Upper lobe of right lung (tissue), 1 donor: ENCODE measurements at regions of chr10 and their contacts with region 1.

Region 1: GRCh38 chr10:71835671-71836595 is 15.1 kb downstream of the PSAP start:
- DNase-seq: no peak
- ATAC-seq: peak; percentile 12
- H3K4me3 ChIP-seq: no peak overlapping the region
- H3K27ac ChIP-seq: peak overlapping the region; percentile 5
- H3K4me1 ChIP-seq: peaks cover 70% of the 10 kb centered on the region
- H3K27me3 ChIP-seq: no peaks in the 10 kb centered on the region
- CTCF ChIP-seq: no peak

Region 2: DNA sequence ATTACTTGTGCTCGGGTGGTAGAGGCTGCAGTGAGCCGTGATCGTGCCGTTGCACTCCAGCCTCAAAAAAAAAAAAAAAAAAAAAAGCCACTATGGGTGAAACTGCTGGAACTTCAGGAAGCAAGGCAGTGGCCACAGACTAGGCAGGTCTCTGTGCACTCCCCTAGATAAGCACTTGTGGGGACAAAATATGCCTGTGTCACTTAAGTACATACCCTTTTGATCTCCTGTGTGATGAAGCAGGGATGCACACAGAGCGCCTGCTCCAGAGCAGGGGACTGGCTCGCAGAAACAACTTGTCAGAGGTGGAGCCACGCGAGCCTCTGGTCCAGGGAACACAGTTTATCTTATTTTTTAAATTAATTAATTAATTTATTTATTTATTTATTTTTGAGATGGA is 58.0 kb after region 1 on chr10:
- intact Hi-C with region 1: loop called (anchors 10 kb)
- DNase-seq: no peak
- ATAC-seq: no peak
- H3K4me3 ChIP-seq: no peak overlapping the region
- H3K27ac ChIP-seq: no peak overlapping the region
- H3K4me1 ChIP-seq: peaks cover 2% of the 10 kb centered on the region
- H3K27me3 ChIP-seq: no peaks in the 10 kb centered on the region
- CTCF ChIP-seq: no peak

Region 3: GRCh38 chr10:72069751-72070526 is 234.0 kb after region 1 on chr10:
- intact Hi-C with region 1: no loop called
- DNase-seq: no peak
- ATAC-seq: no peak
- H3K4me3 ChIP-seq: no peak overlapping the region
- H3K27ac ChIP-seq: no peak overlapping the region
- H3K4me1 ChIP-seq: peaks cover 5% of the 10 kb centered on the region
- H3K27me3 ChIP-seq: no peaks in the 10 kb centered on the region
- CTCF ChIP-seq: no peak

Region 4: GRCh38 chr10:72107325-72108003 is 271.5 kb after region 1 on chr10:
- intact Hi-C with region 1: no loop called
- DNase-seq: no peak
- ATAC-seq: peak; percentile 84
- H3K4me3 ChIP-seq: no peak overlapping the region
- H3K27ac ChIP-seq: peak overlapping the region; percentile 60
- H3K4me1 ChIP-seq: peaks cover 8% of the 10 kb centered on the region
- H3K27me3 ChIP-seq: no peaks in the 10 kb centered on the region
- CTCF ChIP-seq: no peak